Panc1 (cell line): ENCODE measurements at regions of chr19 and their contacts with region 1.

Region 1: DNA sequence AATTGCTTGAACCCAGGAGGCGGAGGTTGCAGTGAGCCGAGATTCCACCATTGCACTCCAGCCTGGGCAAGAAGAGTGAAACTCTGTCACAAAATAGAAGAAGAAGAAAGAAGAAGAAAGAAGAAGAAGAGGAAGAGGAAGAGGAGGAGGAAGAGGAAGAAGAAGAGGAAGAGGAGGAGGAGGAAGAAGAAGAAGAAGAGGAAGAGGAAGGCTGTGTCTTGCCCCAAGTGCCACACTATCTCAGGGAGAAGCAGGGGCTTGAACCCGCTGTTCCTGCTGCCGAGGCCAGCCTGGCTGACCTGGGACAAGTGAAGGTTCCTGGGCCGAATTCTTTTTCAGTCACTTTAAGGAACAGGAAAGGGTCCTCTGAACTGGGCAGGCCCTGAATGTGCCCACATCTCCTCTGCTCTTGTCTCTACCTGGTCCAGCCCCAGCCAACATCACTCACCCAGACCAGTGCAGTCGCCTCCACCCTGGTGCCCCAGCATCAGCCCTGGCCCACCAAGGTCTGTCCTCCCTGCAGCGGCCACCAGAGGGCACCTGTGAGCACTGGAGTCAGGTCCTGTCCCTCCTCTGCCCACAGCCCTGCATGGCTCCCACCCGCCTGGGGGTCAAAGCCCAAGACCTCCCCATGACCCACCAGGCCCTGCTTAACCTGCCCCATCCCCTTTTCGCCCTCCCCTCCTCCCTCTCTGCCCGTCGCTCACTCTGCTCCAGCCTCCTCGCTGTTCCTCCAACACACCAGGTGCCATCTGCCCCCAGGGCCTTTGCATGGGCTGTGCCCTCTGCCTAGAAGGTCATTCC is 20.0 kb downstream of the TICAM1 start:
- DNase-seq: peak; percentile 48
- ATAC-seq: peak; percentile 74
- H3K4me3 ChIP-seq: no peak overlapping the region
- H3K27ac ChIP-seq: no peak overlapping the region
- H3K4me1 ChIP-seq: peaks cover 8% of the 10 kb centered on the region
- H3K27me3 ChIP-seq: no peaks in the 10 kb centered on the region
- CTCF ChIP-seq: peak; percentile 89

Region 2: DNA sequence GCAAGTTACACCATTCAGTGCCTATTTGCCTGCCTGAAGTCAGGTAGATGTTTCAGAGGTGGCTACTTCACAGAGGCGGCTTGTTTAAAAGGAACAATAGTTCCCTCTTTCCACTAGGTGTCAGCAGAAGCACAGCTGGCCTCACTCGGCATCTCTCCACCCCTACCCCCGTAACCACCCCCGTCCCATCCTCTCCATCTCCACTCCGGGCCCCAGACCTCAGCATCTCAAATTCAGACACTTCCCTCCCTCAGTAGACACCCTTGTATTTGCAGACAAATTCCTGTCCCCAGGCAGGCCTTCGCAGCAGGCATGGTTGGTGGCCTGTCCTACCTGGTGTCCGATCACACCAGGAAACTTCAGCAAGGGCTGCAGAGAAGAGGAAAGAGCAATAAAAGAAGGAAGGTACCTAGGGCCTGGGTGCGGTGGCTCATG is 78.8 kb before region 1 on chr19:
- CTCF ChIA-PET with region 1: no interaction called
- POLR2A ChIA-PET with region 1: no interaction called
- in situ Hi-C with region 1: no loop called
- intact Hi-C with region 1: loop called (anchors 5 kb)
- DNase-seq: peak; percentile 35
- ATAC-seq: peak; percentile 91
- H3K4me3 ChIP-seq: peak overlapping the region in 1 of 2 experiments; percentile 23; a peak in 1 of 4 replicates
- H3K27ac ChIP-seq: no peak overlapping the region
- H3K4me1 ChIP-seq: no peaks in the 10 kb centered on the region
- H3K27me3 ChIP-seq: no peaks in the 10 kb centered on the region
- CTCF ChIP-seq: peak; percentile 87

Region 3: DNA sequence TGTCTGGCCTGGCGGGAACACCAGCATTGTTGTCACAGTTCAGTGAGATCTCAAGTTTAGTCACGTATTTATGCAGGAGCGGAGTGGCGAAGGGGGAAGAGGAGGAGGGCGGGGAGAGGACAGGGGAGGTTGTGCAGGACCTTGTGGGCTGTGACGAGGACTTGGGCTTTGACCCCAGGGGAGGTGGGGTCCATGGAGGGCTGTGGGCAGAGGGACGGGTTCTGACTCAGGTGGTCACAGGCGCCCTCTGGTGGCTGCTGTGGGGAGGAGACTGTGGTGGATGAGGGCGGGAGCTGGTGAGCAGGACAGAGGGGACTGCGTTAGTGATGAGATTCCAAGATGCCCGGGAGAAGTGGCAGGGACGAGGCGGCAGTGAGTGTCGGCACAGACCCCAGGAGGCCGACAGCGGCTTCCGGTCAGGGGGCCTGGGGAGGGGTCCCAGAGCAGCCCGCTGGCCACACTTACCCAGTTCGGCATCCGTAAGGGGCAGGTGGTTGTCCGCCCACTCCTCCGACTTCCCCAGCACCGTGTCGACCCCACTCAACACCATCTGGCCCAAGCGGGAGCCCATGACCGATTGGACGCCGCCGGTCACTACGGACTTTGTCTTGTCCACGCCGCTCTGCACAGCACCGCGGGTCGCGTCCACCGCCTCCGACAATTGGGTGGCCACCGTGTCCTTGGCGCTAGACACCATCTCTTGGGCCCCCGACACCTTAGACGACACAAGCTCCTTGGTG is 40.2 kb after region 1 on chr19:
- CTCF ChIA-PET with region 1: interaction called, 19 read pairs
- POLR2A ChIA-PET with region 1: no interaction called
- in situ Hi-C with region 1: no loop called
- intact Hi-C with region 1: loop called (anchors 5 kb)
- DNase-seq: no peak
- ATAC-seq: peak; percentile 87
- H3K4me3 ChIP-seq: no peak overlapping the region
- H3K27ac ChIP-seq: no peak overlapping the region
- H3K4me1 ChIP-seq: no peaks in the 10 kb centered on the region
- H3K27me3 ChIP-seq: no peaks in the 10 kb centered on the region
- CTCF ChIP-seq: peak; percentile 86

Region 4: GRCh38 chr19:4909897-4910593 is 98.5 kb after region 1 on chr19:
- CTCF ChIA-PET with region 1: interaction called, 9 read pairs
- POLR2A ChIA-PET with region 1: no interaction called
- in situ Hi-C with region 1: no loop called
- intact Hi-C with region 1: loop called (anchors 5 kb)
- DNase-seq: no peak
- ATAC-seq: peak; percentile 89
- H3K4me3 ChIP-seq: peak overlapping the region; percentile 55 to 61
- H3K27ac ChIP-seq: peak overlapping the region; percentile 93
- H3K4me1 ChIP-seq: peaks cover 27% of the 10 kb centered on the region
- H3K27me3 ChIP-seq: no peaks in the 10 kb centered on the region
- CTCF ChIP-seq: no peak

Region 5: DNA sequence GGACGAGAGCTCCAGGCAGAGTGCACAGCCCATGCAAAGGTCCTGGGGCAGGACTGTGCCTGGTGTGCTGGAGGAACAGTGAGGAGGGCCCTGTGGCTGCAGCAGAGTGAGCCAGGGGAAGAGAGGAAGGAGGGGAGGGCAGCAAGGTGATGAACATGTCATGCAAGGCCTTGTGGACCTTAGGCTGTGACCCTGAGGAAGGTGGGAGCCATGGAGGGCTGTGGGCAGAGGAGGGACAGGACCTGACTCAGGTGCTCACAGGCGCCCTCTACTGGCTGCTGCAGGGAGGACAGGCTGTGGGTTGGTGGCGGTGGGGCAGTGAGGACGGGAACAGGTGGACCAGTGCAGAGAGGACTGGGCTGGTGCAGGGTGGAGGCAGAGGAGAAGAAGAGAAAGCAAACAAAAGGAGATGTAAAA is 358.8 kb after region 1 on chr19:
- CTCF ChIA-PET with region 1: no interaction called
- POLR2A ChIA-PET with region 1: interaction called, 12 read pairs
- in situ Hi-C with region 1: no loop called
- intact Hi-C with region 1: no loop called
- DNase-seq: no peak
- ATAC-seq: peak; percentile 56; the same call in 1 of the 2 replicates
- H3K4me3 ChIP-seq: no peak overlapping the region
- H3K27ac ChIP-seq: no peak overlapping the region
- H3K4me1 ChIP-seq: no peaks in the 10 kb centered on the region
- H3K27me3 ChIP-seq: no peaks in the 10 kb centered on the region
- CTCF ChIP-seq: no peak; the same call in 1 of the 2 replicates